HCT116 (cell line): ENCODE measurements at regions of chr5 and their contacts with region 1.

Region 1: GRCh38 chr5:40688127-40688761 is 8.5 kb downstream of the PTGER4 start:
- DNase-seq: peak; percentile 85
- ATAC-seq: peak; percentile 93
- H3K4me3 ChIP-seq: no peak overlapping the region
- H3K27ac ChIP-seq: no peak overlapping the region
- H3K4me1 ChIP-seq: peaks cover 15 to 27% of the 10 kb centered on the region in 2 experiments; a peak in 3 of 4 replicates
- H3K27me3 ChIP-seq: no peaks in the 10 kb centered on the region
- CTCF ChIP-seq: peak; percentile 73 to 87 (median 75)
- POLR2A ChIP-seq: no peak
- RAD21 ChIP-seq: peak; percentile 94

Region 2: GRCh38 chr5:39578887-39579497 is 1109.3 kb before region 1 on chr5:
- CTCF ChIA-PET with region 1: interaction called, 3 read pairs
- POLR2A ChIA-PET with region 1: no interaction called
- RAD21 ChIA-PET with region 1: no interaction called
- intact Hi-C with region 1: loop called (anchors 2 kb)
- DNase-seq: peak; percentile 18
- ATAC-seq: no peak
- H3K4me3 ChIP-seq: no peak overlapping the region
- H3K27ac ChIP-seq: no peak overlapping the region
- H3K4me1 ChIP-seq: no peaks in the 10 kb centered on the region
- H3K27me3 ChIP-seq: no peaks in the 10 kb centered on the region
- CTCF ChIP-seq: peak; percentile 16 to 59 (median 19); a peak in 3 of 6 replicates
- POLR2A ChIP-seq: no peak
- RAD21 ChIP-seq: peak; percentile 62

Region 3: GRCh38 chr5:39714036-39714698 is 974.1 kb before region 1 on chr5:
- CTCF ChIA-PET with region 1: interaction called, 5 read pairs
- POLR2A ChIA-PET with region 1: interaction called, 3 read pairs
- RAD21 ChIA-PET with region 1: no interaction called
- intact Hi-C with region 1: loop called (anchors 1 kb)
- DNase-seq: peak; percentile 69
- ATAC-seq: peak; percentile 76
- H3K4me3 ChIP-seq: no peak overlapping the region
- H3K27ac ChIP-seq: no peak overlapping the region
- H3K4me1 ChIP-seq: no peaks in the 10 kb centered on the region; a peak in 1 of 4 replicates
- H3K27me3 ChIP-seq: no peaks in the 10 kb centered on the region
- CTCF ChIP-seq: peak; percentile 53 to 69 (median 65)
- POLR2A ChIP-seq: no peak
- RAD21 ChIP-seq: peak; percentile 80

Region 4: DNA sequence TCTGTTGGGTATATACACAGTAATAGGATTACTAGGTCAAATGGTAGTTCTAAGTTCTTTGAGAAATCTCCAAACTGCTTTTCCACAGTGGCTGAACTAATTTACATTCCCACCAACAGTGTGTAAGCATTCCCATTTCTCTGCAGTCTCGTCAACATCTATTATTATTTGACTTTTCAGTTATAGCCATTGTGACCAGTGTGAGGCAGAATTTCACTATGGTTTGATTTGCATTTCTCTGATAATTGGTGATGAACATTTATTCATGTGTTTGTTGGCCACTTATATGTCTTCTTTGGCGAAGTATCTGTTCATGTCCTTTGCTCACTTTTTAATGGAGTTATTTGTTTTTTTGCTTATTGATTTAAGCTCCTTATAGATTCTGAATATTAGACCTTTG is 667.2 kb before region 1 on chr5:
- CTCF ChIA-PET with region 1: no interaction called
- POLR2A ChIA-PET with region 1: no interaction called
- RAD21 ChIA-PET with region 1: no interaction called
- intact Hi-C with region 1: loop called (anchors 2 kb)
- DNase-seq: no peak
- ATAC-seq: no peak
- H3K4me3 ChIP-seq: no peak overlapping the region
- H3K27ac ChIP-seq: no peak overlapping the region
- H3K4me1 ChIP-seq: no peaks in the 10 kb centered on the region
- H3K27me3 ChIP-seq: no peaks in the 10 kb centered on the region
- CTCF ChIP-seq: peak in 1 of 3 experiments; percentile 29; a peak in 1 of 6 replicates
- POLR2A ChIP-seq: no peak
- RAD21 ChIP-seq: peak; percentile 29; the same call in 1 of the 2 replicates

Region 5: GRCh38 chr5:40676613-40677333 is 11.5 kb before region 1 on chr5:
- CTCF ChIA-PET with region 1: no interaction called
- POLR2A ChIA-PET with region 1: no interaction called
- RAD21 ChIA-PET with region 1: no interaction called
- intact Hi-C with region 1: no loop called
- DNase-seq: no peak
- ATAC-seq: no peak
- H3K4me3 ChIP-seq: no peak overlapping the region
- H3K27ac ChIP-seq: no peak overlapping the region; the same call in 1 of the 2 replicates
- H3K4me1 ChIP-seq: peaks cover 19 to 33% of the 10 kb centered on the region in 2 experiments
- H3K27me3 ChIP-seq: no peaks in the 10 kb centered on the region
- CTCF ChIP-seq: no peak
- POLR2A ChIP-seq: no peak
- RAD21 ChIP-seq: no peak

Region 6: DNA sequence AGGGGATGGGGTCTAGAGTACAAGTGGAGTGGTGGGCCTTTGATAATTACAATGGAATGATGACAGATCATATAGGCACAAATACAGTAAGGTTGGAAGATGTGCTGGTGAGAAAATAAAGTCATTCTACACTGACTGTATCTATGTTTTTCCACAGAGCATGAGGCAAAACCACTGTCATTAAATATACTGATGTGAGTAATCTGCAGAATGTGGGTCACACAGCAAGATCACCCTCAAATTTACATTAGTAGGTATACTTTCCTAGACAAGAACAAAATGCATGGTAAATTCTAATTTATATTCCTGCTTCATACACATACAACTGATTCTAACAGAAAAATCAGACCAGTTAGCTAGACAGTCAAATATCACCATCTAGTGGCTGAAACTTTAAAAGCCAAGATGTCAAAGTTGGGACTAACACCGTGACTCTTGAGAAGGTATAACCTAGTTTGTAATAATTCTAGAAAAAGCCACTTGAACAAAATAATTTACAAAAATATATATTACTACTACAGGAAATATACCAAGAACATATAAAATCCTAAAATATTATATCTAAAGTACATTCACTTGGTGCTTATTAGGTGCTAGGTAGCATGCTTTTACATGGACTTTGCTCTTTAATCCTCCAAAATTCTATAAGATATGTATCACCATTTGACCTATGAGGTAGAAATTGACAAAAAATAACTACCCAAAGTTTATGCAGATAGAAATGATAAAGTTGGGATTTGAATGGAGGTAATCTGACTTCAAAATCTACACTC is 48.0 kb after region 1 on chr5:
- CTCF ChIA-PET with region 1: interaction called, 3 read pairs
- POLR2A ChIA-PET with region 1: no interaction called
- RAD21 ChIA-PET with region 1: no interaction called
- intact Hi-C with region 1: loop called (anchors 2 kb)
- DNase-seq: peak; percentile 50
- ATAC-seq: peak; percentile 72
- H3K4me3 ChIP-seq: no peak overlapping the region
- H3K27ac ChIP-seq: no peak overlapping the region
- H3K4me1 ChIP-seq: peaks cover 0 to 17% of the 10 kb centered on the region in 2 experiments; a peak in 1 of 4 replicates
- H3K27me3 ChIP-seq: no peaks in the 10 kb centered on the region
- CTCF ChIP-seq: peak; percentile 44 to 75 (median 63); a peak in 5 of 6 replicates
- POLR2A ChIP-seq: no peak
- RAD21 ChIP-seq: peak; percentile 77

Region 7: DNA sequence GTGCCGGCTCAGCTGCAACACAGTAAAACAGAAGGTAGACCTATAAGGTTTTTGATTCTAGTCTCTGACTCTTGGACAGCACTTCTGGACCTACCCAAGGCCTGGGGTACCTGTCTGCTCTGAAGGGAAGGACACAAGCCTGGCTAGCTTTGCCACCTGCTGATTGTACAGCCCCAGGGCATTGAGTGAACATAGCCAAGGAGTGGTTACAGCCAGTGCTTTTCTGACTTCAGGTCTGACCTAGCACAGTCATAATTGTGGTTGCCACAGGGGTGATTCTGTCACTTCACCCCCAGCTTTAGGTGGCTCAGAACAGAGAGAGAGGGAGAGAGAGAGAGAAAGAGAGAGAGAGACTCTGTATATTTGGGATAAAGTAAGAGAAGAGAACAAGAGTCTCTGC is 703.8 kb after region 1 on chr5:
- CTCF ChIA-PET with region 1: no interaction called
- POLR2A ChIA-PET with region 1: no interaction called
- RAD21 ChIA-PET with region 1: no interaction called
- intact Hi-C with region 1: no loop called
- DNase-seq: no peak
- ATAC-seq: no peak
- H3K4me3 ChIP-seq: no peak overlapping the region
- H3K27ac ChIP-seq: no peak overlapping the region
- H3K4me1 ChIP-seq: no peaks in the 10 kb centered on the region
- H3K27me3 ChIP-seq: no peaks in the 10 kb centered on the region
- CTCF ChIP-seq: no peak
- POLR2A ChIP-seq: no peak
- RAD21 ChIP-seq: no peak